ENCODE measurements at regions of chr3 and their contacts with region 1.

Region 1: GRCh38 chr3:58568572-58569286 is 8.5 kb downstream of the FAM107A start:
- DNase-seq: peak; percentile 62 to 97 (median 90)

Region 2: DNA sequence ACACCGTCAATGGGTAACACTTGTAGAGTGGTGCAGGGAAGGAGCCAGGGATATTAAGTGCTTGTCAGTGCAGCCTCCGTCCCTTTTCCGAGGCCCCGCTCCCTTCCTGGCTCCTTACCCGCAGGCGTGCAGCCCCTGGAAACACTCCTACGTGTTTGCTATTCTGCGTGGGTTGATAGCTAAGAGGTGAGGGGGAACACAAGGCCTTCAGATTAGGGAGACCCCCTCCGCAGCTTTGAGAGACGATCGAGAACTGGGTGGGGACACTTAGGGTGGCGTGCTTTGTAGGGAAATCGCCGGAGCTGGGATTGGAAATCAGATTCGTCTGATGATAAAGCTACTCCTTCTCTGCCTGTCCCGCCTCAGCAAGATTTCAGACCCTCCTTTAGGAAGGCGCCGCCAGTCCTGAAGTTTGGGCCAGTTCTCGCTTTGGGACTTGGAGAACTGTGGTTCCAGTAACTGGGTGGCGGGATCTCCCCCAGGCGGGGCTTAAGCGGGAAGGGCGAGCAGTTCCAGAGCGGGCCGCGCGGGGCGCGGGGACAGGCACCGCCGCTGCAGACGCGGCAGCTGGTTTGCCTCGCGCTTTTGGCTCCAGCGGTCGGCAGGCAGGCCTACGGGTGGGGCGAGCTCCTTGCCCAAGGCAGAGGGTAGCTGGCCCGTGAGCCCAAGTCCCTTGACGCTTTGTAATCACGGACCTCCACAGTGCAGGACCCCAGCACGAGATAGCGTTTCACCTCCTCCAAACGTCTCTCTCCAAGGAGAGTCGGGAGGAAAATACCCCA is 16.5 kb after region 1 on chr3:
- intact Hi-C with region 1: loop called (anchors 1 kb)
- DNase-seq: peak; percentile 64 to 97 (median 84)

Region 3: GRCh38 chr3:58630076-58630709 is 61.5 kb after region 1 on chr3:
- intact Hi-C with region 1: loop called (anchors 1 kb)
- DNase-seq: peak in 8 of 10 donors; percentile 35 to 88 (median 75)

Region 4: GRCh38 chr3:58659051-58659675 is 90.4 kb after region 1 on chr3:
- intact Hi-C with region 1: no loop called
- DNase-seq: no peak

Region 5: GRCh38 chr3:59839810-59840515 is 1271.2 kb after region 1 on chr3:
- intact Hi-C with region 1: no loop called
- DNase-seq: no peak